Activated CD4-positive, alpha-beta memory T cell treated with anti-CD3 and anti-CD28 coated beads for 36 hours (primary cell): ENCODE measurements at regions of chr17 and their contacts with region 1.

Region 1: DNA sequence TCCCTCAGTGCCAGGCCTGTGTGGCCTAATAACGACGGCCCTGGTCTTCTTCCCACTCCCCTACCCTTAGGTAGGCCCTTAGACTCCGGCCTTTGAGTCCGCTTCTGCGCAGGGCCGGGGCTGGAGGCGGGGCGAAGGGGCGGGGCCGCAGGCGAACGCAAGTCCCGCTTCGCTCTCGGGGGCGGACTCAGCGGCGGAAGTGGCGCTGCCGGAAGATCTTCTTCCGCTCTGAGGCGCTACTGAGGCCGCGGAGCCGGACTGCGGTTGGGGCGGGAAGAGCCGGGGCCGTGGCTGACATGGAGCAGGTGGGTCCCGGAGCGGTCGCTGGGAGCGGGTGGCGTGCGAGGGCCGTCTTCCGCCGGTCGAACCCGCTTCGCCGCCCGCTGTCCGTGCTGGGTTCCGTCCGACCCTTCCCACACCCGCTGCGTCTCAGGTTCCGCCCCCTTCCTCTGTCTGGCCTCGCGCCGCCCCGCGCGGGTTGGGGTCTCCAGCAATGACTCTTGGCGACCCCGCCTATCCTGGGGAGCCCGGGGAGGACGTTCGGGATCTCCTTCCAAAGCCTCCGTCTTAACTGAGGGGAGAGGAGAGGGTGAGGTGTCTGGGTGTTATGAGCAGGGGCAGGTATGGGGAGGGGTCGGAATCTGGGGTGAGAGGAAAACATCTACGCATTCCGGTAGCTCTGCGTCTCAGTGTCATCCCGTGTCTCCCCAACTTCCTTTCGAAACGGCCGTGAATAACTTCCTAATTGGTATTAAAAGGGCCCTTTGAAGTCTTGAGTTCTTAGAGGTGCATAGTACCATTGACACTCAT is at the start of gene STARD3:
- DNase-seq: peak; percentile 95
- H3K4me3 Mint-ChIP-seq: peak within 1 kb of the TSS; percentile 88
- H3K27ac Mint-ChIP-seq: peak within 1 kb of the TSS; percentile 83
- H3K4me1 Mint-ChIP-seq: peaks cover 51% of the 10 kb centered on the region
- H3K27me3 Mint-ChIP-seq: no peaks in the 10 kb centered on the region
- total RNA-seq, gene STARD3: 53.6 to 60.3 TPM

Region 2: DNA sequence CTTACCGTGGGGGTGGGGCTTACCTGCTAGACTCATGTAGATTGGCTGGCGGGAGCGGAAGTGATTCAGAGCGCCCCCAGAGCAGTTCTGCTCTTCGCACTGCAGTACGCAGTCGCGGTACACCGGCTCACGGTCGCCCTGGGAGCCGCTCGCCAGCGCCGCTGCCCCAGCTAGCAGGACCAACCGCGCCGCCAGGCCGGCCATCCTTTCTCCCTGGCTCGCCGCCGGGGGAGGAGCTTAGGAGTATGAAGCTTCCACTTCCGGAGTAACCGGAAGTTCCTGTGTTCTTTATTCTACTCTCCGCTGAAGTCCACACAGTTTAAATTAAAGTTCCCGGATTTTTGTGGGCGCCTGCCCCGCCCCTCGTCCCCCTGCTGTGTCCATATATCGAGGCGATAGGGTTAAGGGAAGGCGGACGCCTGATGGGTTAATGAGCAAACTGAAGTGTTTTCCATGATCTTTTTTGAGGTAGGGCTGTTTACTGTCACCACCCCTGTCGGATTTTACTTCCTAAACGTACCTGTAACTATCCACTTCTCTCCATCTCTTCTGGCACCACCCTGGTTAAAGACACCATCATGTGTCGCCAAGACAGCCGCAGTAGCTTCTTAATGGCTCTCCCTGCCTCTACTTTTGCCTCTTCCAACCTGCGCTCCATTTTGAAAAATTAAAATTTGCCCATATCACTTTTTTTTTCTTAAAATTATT is 50.8 kb after region 1 on chr17 and contains the start of gene PGAP3:
- CTCF ChIA-PET with region 1: no interaction called
- POLR2A ChIA-PET with region 1: no interaction called
- intact Hi-C with region 1: loop called (anchors 5 kb)
- DNase-seq: peak; percentile 91
- H3K4me3 Mint-ChIP-seq: peak within 1 kb of the TSS; percentile 92
- H3K27ac Mint-ChIP-seq: peak within 1 kb of the TSS; percentile 84
- H3K4me1 Mint-ChIP-seq: peaks cover 18% of the 10 kb centered on the region
- H3K27me3 Mint-ChIP-seq: no peaks in the 10 kb centered on the region
- total RNA-seq, gene PGAP3: 8.3 to 8.6 TPM

Region 3: DNA sequence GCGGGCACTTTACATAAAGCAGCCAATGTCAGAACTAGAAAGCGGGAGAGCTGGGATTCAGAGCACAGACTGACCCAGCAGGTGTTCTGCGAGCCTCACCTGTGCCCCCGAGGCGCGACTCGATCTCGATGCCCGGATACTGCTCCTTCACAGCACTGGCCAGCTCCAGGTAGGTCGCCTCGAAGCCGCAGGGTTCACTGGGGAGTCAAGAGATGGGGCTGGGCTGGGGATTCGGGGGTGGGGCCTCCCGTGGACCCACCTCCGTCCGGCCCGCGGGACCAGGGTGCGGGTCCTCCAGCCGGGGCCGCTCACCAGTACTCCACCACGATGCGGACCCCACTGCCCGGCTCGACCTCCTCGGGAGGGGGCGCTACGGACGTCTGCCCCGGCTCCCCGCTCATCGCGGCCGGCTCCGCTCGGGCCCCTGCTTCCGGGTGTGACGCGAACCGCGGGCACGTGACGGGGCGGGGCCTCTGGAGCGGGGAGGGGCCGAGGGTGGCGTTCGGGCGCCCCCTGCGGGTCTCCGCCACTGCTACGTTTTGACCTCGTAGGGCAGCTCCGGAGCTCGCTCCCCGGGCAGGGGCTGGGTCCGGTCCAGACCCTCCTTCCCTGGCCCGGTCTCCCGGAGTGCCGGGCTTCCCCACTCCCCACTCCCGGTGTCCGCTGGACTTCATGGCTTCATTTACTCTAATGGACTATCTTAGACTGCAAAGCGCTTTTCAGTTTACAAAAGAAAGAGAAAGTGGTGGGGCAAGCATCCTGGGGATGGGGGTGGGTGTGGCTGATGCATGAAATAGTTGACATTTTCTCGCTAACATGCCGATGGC is 93.2 kb after region 1 on chr17 and contains the start of gene MIEN1:
- CTCF ChIA-PET with region 1: interaction called, 7 read pairs
- POLR2A ChIA-PET with region 1: no interaction called
- intact Hi-C with region 1: loop called (anchors 5 kb)
- DNase-seq: peak; percentile 95
- H3K4me3 Mint-ChIP-seq: peak within 1 kb of the TSS; percentile 88
- H3K27ac Mint-ChIP-seq: peak within 1 kb of the TSS; percentile 73
- H3K4me1 Mint-ChIP-seq: peaks cover 12% of the 10 kb centered on the region
- H3K27me3 Mint-ChIP-seq: no peaks in the 10 kb centered on the region
- total RNA-seq, gene MIEN1: 41.0 to 43.8 TPM